ENCODE measurements at regions of chr3 and their contacts with region 1.

Region 1: GRCh38 chr3:99023590-99024192 is 122.2 kb upstream of the DCBLD2 start:
- DNase-seq: peak in 1 of 2 experiments; percentile 14
- H3K4me3 ChIP-seq: no peak overlapping the region
- H3K4me3 Mint-ChIP-seq: no peak overlapping the region
- H3K27ac Mint-ChIP-seq: no peak overlapping the region
- H3K4me1 ChIP-seq: no peaks in the 10 kb centered on the region
- H3K4me1 Mint-ChIP-seq: no peaks in the 10 kb centered on the region
- H3K27me3 ChIP-seq: no peaks in the 10 kb centered on the region
- H3K27me3 Mint-ChIP-seq: peaks cover 4% of the 10 kb centered on the region
- CTCF ChIP-seq: peak; percentile 52 to 57

Region 2: GRCh38 chr3:99084826-99085225 is 61.1 kb after region 1 on chr3:
- CTCF ChIA-PET with region 1: no interaction called
- POLR2A ChIA-PET with region 1: no interaction called
- intact Hi-C with region 1: loop called (anchors 10 kb)
- DNase-seq: no peak
- H3K4me3 ChIP-seq: no peak overlapping the region
- H3K4me3 Mint-ChIP-seq: no peak overlapping the region
- H3K27ac Mint-ChIP-seq: no peak overlapping the region
- H3K4me1 ChIP-seq: no peaks in the 10 kb centered on the region
- H3K4me1 Mint-ChIP-seq: no peaks in the 10 kb centered on the region
- H3K27me3 ChIP-seq: no peaks in the 10 kb centered on the region
- H3K27me3 Mint-ChIP-seq: peaks cover 16% of the 10 kb centered on the region
- CTCF ChIP-seq: no peak

Region 3: DNA sequence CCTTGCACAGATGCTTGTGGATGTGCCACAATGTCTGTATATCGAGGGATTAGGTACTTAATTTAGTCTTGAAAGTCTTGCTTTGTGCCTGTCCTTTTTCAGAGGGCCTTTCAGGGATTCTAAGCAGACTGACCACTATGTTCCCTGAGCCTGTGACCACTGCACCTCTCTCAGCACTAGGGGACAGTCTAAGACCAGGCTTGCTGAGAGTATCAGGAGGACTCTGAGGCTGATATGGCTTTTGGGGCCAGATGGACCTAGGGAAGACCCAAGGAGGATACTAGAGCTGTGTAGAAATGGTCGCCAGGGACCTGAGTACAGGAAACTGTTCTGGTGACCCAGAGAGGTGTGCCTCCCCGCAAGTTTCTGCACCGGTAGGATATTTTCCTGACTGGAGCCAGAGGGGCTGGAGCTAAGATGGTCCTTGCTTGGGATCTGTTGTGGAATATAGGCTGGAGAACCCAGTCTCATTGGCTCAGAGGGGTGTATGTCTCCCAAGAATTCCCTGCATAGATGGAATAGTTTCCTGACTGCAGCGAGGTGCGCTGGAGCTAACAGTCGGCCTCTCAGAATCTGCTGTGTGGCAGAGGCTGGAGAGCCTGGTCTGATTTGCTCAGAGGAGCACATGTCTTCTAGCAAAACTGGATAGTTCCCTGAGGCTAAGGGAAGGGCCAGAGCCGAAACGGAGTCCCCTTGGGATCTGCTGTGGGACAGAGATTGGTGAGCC is 91.0 kb after region 1 on chr3:
- CTCF ChIA-PET with region 1: no interaction called
- POLR2A ChIA-PET with region 1: no interaction called
- intact Hi-C with region 1: loop called (anchors 10 kb)
- DNase-seq: peak in 1 of 2 experiments; percentile 15
- H3K4me3 ChIP-seq: no peak overlapping the region
- H3K4me3 Mint-ChIP-seq: no peak overlapping the region
- H3K27ac Mint-ChIP-seq: no peak overlapping the region
- H3K4me1 ChIP-seq: no peaks in the 10 kb centered on the region
- H3K4me1 Mint-ChIP-seq: no peaks in the 10 kb centered on the region
- H3K27me3 ChIP-seq: no peaks in the 10 kb centered on the region
- H3K27me3 Mint-ChIP-seq: peaks cover 16% of the 10 kb centered on the region
- CTCF ChIP-seq: peak; percentile 24 to 68

Region 4: GRCh38 chr3:99172736-99173657 is 149.3 kb after region 1 on chr3:
- CTCF ChIA-PET with region 1: interaction called, 14 read pairs
- POLR2A ChIA-PET with region 1: no interaction called
- intact Hi-C with region 1: loop called (anchors 1 kb)
- DNase-seq: peak; percentile 51 to 61
- H3K4me3 ChIP-seq: no peak overlapping the region
- H3K4me3 Mint-ChIP-seq: no peak overlapping the region
- H3K27ac Mint-ChIP-seq: no peak overlapping the region
- H3K4me1 ChIP-seq: no peaks in the 10 kb centered on the region
- H3K4me1 Mint-ChIP-seq: no peaks in the 10 kb centered on the region
- H3K27me3 ChIP-seq: no peaks in the 10 kb centered on the region
- H3K27me3 Mint-ChIP-seq: no peaks in the 10 kb centered on the region
- CTCF ChIP-seq: peak; percentile 68 to 76

Region 5: GRCh38 chr3:99532246-99532645 is 508.6 kb after region 1 on chr3:
- CTCF ChIA-PET with region 1: no interaction called
- POLR2A ChIA-PET with region 1: no interaction called
- intact Hi-C with region 1: loop called (anchors 10 kb)
- DNase-seq: peak; percentile 54 to 66
- H3K4me3 ChIP-seq: no peak overlapping the region
- H3K4me3 Mint-ChIP-seq: no peak overlapping the region
- H3K27ac Mint-ChIP-seq: no peak overlapping the region
- H3K4me1 ChIP-seq: no peaks in the 10 kb centered on the region
- H3K4me1 Mint-ChIP-seq: no peaks in the 10 kb centered on the region
- H3K27me3 ChIP-seq: no peaks in the 10 kb centered on the region
- H3K27me3 Mint-ChIP-seq: no peaks in the 10 kb centered on the region
- CTCF ChIP-seq: peak; percentile 51 to 70

Region 6: GRCh38 chr3:99753268-99753975 is 729.7 kb after region 1 on chr3:
- CTCF ChIA-PET with region 1: no interaction called
- POLR2A ChIA-PET with region 1: no interaction called
- intact Hi-C with region 1: loop called (anchors 1 kb)
- DNase-seq: peak in 1 of 2 experiments; percentile 41
- H3K4me3 ChIP-seq: no peak overlapping the region
- H3K4me3 Mint-ChIP-seq: no peak overlapping the region
- H3K27ac Mint-ChIP-seq: no peak overlapping the region
- H3K4me1 ChIP-seq: no peaks in the 10 kb centered on the region
- H3K4me1 Mint-ChIP-seq: no peaks in the 10 kb centered on the region
- H3K27me3 ChIP-seq: no peaks in the 10 kb centered on the region; the same call in 1 of the 2 replicates
- H3K27me3 Mint-ChIP-seq: peaks cover 13% of the 10 kb centered on the region
- CTCF ChIP-seq: peak; percentile 68